Activated naive CD4-positive, alpha-beta T cell treated with anti-CD3 and anti-CD28 coated beads for 36 hours (primary cell): ENCODE measurements at regions of chr3 and their contacts with region 1.

Region 1: GRCh38 chr3:196942226-196942914 is at the start of gene NCBP2:
- DNase-seq: peak; percentile 100
- H3K4me3 Mint-ChIP-seq: peak within 1 kb of the TSS; percentile 91
- H3K27ac Mint-ChIP-seq: peak within 1 kb of the TSS; percentile 89
- H3K4me1 Mint-ChIP-seq: peaks cover 50% of the 10 kb centered on the region
- H3K27me3 Mint-ChIP-seq: no peaks in the 10 kb centered on the region
- total RNA-seq, gene NCBP2: 91.7 to 98.3 TPM

Region 2: GRCh38 chr3:196287440-196288148 is 654.8 kb before region 1 on chr3 and contains the start of gene PCYT1A:
- CTCF ChIA-PET with region 1: no interaction called
- intact Hi-C with region 1: loop called (anchors 1 kb)
- DNase-seq: peak; percentile 84
- H3K4me3 Mint-ChIP-seq: peak within 1 kb of the TSS; percentile 100
- H3K27ac Mint-ChIP-seq: peak within 1 kb of the TSS; percentile 99
- H3K4me1 Mint-ChIP-seq: peaks cover 37% of the 10 kb centered on the region
- H3K27me3 Mint-ChIP-seq: no peaks in the 10 kb centered on the region
- total RNA-seq, gene PCYT1A: 27.4 to 28.4 TPM

Region 3: GRCh38 chr3:196609343-196609775 is 333.0 kb before region 1 on chr3:
- CTCF ChIA-PET with region 1: interaction called, 3 read pairs
- intact Hi-C with region 1: loop called (anchors 1 kb)
- DNase-seq: peak; percentile 96
- H3K4me3 Mint-ChIP-seq: peak overlapping the region; percentile 35
- H3K27ac Mint-ChIP-seq: peak overlapping the region; percentile 21
- H3K4me1 Mint-ChIP-seq: peaks cover 33% of the 10 kb centered on the region
- H3K27me3 Mint-ChIP-seq: no peaks in the 10 kb centered on the region

Region 4: GRCh38 chr3:196711838-196712513 is 230.4 kb before region 1 on chr3 and contains the starts of genes CEP19 and PIGX:
- CTCF ChIA-PET with region 1: interaction called, 3 read pairs
- intact Hi-C with region 1: loop called (anchors 1 kb)
- DNase-seq: peak; percentile 94
- H3K4me3 Mint-ChIP-seq: peak within 1 kb of the TSS; percentile 83
- H3K27ac Mint-ChIP-seq: peak within 1 kb of the TSS; percentile 92
- H3K4me1 Mint-ChIP-seq: peaks cover 34% of the 10 kb centered on the region
- H3K27me3 Mint-ChIP-seq: no peaks in the 10 kb centered on the region
- total RNA-seq, gene CEP19: 3.1 to 4.4 TPM
- total RNA-seq, gene PIGX: 30.7 to 32.8 TPM

Region 5: DNA sequence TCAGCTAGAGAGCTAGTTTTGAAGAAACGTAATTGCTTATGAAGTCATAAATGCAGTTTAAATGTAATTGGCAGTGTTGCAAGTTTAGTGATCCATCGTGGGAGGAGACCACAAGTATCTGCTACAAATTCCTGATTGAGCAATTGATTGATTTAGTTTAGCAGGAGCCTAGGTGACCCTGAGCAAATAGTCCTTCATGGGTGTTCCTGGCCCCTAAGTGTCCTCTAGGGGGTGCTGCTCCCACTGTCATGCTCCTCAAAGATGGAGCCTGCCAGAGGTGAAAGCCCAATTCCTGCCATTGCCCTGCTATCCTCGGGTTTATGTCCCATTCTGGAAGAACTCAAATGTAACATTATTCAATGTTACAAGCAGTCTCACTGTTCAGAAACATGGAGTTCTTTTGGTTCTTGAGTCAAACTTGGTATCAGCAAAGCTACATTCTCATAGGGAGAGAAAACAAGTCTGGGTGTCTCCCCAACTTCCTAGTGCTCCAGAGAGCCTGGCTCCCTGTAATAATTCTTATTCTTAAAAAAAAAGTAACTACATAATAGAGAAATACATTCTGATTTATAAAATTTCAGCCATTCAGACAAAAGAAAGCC is 104.5 kb before region 1 on chr3:
- CTCF ChIA-PET with region 1: interaction called, 14 read pairs
- intact Hi-C with region 1: loop called (anchors 1 kb)
- DNase-seq: peak; percentile 90
- H3K4me3 Mint-ChIP-seq: no peak overlapping the region
- H3K27ac Mint-ChIP-seq: no peak overlapping the region
- H3K4me1 Mint-ChIP-seq: no peaks in the 10 kb centered on the region
- H3K27me3 Mint-ChIP-seq: no peaks in the 10 kb centered on the region

Region 6: GRCh38 chr3:196969660-196970546 is 27.5 kb after region 1 on chr3:
- CTCF ChIA-PET with region 1: no interaction called
- intact Hi-C with region 1: loop called (anchors 1 kb)
- DNase-seq: peak; percentile 68
- H3K4me3 Mint-ChIP-seq: peak overlapping the region; percentile 70
- H3K27ac Mint-ChIP-seq: no peak overlapping the region
- H3K4me1 Mint-ChIP-seq: peaks cover 7% of the 10 kb centered on the region
- H3K27me3 Mint-ChIP-seq: peaks cover 22% of the 10 kb centered on the region